ENCODE measurements at regions of chr18 and their contacts with region 1.

Region 1: GRCh38 chr18:36296650-36297416 is 680 bp upstream of the FHOD3 start:
- DNase-seq: peak; percentile 69 to 76 (median 72)
- ATAC-seq: peak; percentile 41 to 72 (median 52)
- H3K4me3 ChIP-seq: peak overlapping the region; percentile 36 to 92 (median 75)
- H3K27ac ChIP-seq: peak overlapping the region in 11 of 12 donors; percentile 64 to 94 (median 89)
- H3K4me1 ChIP-seq: peaks cover 0 to 33% (median 11%) of the 10 kb centered on the region in 12 donors
- H3K27me3 ChIP-seq: peaks cover 0 to 59% (median 9%) of the 10 kb centered on the region in 9 donors
- CTCF ChIP-seq: peak in 7 of 12 donors; percentile 31 to 61 (median 51)
- POLR2A ChIP-seq: no peak

Region 2: GRCh38 chr18:36335476-36336279 is 38.8 kb after region 1 on chr18:
- intact Hi-C with region 1: loop called in 1 of 10 experiments (anchors 5 kb)
- DNase-seq: no peak
- ATAC-seq: no peak
- H3K4me3 ChIP-seq: no peak overlapping the region
- H3K27ac ChIP-seq: no peak overlapping the region
- H3K4me1 ChIP-seq: peaks cover 0 to 70% (median 24%) of the 10 kb centered on the region in 12 donors
- H3K27me3 ChIP-seq: no peaks in the 10 kb centered on the region
- CTCF ChIP-seq: no peak
- POLR2A ChIP-seq: no peak

Region 3: DNA sequence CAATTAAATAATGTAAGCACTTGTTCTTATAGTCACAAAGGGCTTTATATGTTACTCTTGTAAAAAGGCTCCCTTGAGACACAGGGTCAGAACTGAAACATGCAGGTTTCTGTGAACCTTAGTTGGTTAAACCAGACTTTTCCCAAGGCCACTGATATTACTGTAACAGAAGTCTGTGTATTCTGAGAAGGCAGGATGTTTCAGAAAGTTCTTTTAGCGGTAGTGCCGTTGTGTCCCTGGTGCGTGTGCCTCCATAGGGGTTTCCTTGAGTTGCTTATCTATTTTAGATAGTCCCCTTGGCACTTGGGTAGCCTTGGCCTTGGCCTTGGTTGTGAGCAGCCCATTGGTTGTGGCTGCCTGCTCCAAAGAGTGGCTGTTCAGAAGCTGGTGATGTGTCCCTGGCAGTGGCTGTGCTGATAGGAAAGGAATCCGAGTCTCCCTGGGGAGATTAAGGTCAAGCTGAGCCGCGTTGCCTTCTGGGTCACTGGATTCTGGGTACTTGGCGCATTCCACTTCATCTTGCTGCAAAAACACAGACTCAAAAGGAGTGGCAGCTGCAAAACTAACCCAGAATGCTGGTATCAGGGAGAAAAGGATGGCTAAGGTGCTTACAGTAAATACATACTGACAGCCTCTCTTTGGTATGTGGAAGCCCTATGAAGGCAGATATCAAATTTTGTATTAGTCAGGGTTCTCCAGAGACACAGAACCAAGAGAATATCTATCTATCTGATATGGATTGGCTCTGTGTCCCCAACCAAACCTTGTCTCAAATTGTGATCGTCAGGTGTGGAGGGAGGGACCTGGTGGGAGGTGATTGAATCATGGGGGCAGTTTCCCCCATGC is 70.4 kb after region 1 on chr18:
- intact Hi-C with region 1: loop called in 2 of 10 experiments (anchors 5 kb)
- DNase-seq: peak; percentile 72 to 91 (median 75)
- ATAC-seq: peak; percentile 96 to 97 (median 97)
- H3K4me3 ChIP-seq: no peak overlapping the region
- H3K27ac ChIP-seq: peak overlapping the region in 11 of 12 donors; percentile 25 to 87 (median 62)
- H3K4me1 ChIP-seq: peaks cover 0 to 59% (median 17%) of the 10 kb centered on the region in 12 donors
- H3K27me3 ChIP-seq: peaks cover 0 to 2% (median 0%) of the 10 kb centered on the region in 9 donors
- CTCF ChIP-seq: no peak
- POLR2A ChIP-seq: no peak

Region 4: DNA sequence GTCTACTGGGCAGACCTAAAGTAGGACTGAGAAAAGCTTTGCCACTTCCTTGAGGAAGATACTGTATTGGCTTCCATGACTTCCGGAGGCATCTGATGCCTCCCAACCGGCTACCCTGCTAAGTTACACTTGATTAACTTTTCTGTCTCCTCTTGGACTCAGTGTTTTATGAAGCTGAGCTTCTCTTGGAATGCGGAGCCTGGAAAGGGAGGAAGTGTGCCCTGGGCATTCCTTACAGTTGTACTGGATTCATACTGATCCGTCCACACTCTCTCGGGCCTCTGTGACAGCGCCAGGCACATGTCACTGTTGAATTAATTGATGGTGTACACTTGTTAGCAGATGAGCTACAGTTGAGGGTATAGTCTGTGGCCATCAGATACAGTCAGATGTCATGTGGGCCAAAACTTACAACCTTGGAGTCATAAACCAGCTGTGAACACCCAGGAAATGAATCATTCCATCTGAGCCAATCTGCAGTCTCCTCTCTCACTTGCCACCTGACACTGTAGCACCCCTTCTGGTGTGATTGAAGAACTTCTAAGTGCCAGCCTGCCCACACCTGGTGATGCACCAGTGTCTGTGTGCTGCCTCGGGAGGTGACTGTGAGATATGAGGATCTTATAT is 123.2 kb after region 1 on chr18:
- intact Hi-C with region 1: no loop called
- DNase-seq: no peak
- ATAC-seq: peak in 3 of 4 donors; percentile 15 to 31 (median 27)
- H3K4me3 ChIP-seq: no peak overlapping the region
- H3K27ac ChIP-seq: peak overlapping the region; percentile 10 to 89 (median 76)
- H3K4me1 ChIP-seq: peaks cover 0 to 81% (median 32%) of the 10 kb centered on the region in 12 donors
- H3K27me3 ChIP-seq: no peaks in the 10 kb centered on the region
- CTCF ChIP-seq: peak in 3 of 12 donors; percentile 4 to 16 (median 7)
- POLR2A ChIP-seq: no peak

Region 5: DNA sequence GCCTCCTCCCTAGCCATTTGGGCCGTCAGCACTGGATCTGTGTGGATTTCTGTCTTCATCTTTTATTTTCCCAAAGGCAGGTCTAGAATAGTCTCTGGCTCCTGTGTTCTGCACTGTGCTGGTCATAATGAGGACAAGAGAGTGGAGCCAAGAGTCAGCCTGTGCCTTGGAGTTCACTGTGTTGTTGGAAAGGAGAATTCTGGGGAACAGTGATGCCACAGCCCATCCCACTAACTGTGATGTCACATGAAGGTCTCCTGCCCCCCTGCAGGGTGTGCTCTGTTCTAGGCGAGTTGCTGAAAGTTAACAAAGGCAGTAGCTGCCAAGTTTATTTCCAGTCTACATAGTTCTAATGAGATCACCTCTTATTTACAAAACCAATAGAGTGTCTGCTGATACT is 283.4 kb after region 1 on chr18:
- intact Hi-C with region 1: loop called in 2 of 10 experiments (anchors 5 to 10 kb)
- DNase-seq: peak in 4 of 5 donors; percentile 38 to 65 (median 44)
- ATAC-seq: peak; percentile 89 to 93 (median 92)
- H3K4me3 ChIP-seq: no peak overlapping the region
- H3K27ac ChIP-seq: peak overlapping the region in 10 of 12 donors; percentile 50 to 92 (median 74)
- H3K4me1 ChIP-seq: peaks cover 0 to 30% (median 10%) of the 10 kb centered on the region in 12 donors
- H3K27me3 ChIP-seq: no peaks in the 10 kb centered on the region
- CTCF ChIP-seq: peak in 4 of 12 donors; percentile 6 to 39 (median 16)
- POLR2A ChIP-seq: no peak

Region 6: GRCh38 chr18:36661999-36662398 is 365.2 kb after region 1 on chr18:
- intact Hi-C with region 1: loop called in 3 of 10 experiments (anchors 10 kb)
- DNase-seq: peak in 1 of 5 donors; percentile 33
- ATAC-seq: peak in 1 of 4 donors; percentile 26
- H3K4me3 ChIP-seq: no peak overlapping the region
- H3K27ac ChIP-seq: no peak overlapping the region
- H3K4me1 ChIP-seq: peaks cover 0 to 20% (median 2%) of the 10 kb centered on the region in 12 donors
- H3K27me3 ChIP-seq: no peaks in the 10 kb centered on the region
- CTCF ChIP-seq: peak in 5 of 12 donors; percentile 10 to 28 (median 23)
- POLR2A ChIP-seq: no peak

Region 7: GRCh38 chr18:36757081-36757480 is 460.2 kb after region 1 on chr18:
- intact Hi-C with region 1: loop called in 1 of 10 experiments (anchors 10 kb)
- DNase-seq: no peak
- ATAC-seq: peak in 2 of 4 donors; percentile 46 to 51
- H3K4me3 ChIP-seq: no peak overlapping the region
- H3K27ac ChIP-seq: no peak overlapping the region
- H3K4me1 ChIP-seq: peaks cover 0 to 23% (median 8%) of the 10 kb centered on the region in 12 donors
- H3K27me3 ChIP-seq: no peaks in the 10 kb centered on the region
- CTCF ChIP-seq: peak; percentile 40 to 70 (median 55)
- POLR2A ChIP-seq: no peak